Cardiac septum (tissue), 1 donor: ENCODE measurements at regions of chr20 and their contacts with region 1.

Region 1: DNA sequence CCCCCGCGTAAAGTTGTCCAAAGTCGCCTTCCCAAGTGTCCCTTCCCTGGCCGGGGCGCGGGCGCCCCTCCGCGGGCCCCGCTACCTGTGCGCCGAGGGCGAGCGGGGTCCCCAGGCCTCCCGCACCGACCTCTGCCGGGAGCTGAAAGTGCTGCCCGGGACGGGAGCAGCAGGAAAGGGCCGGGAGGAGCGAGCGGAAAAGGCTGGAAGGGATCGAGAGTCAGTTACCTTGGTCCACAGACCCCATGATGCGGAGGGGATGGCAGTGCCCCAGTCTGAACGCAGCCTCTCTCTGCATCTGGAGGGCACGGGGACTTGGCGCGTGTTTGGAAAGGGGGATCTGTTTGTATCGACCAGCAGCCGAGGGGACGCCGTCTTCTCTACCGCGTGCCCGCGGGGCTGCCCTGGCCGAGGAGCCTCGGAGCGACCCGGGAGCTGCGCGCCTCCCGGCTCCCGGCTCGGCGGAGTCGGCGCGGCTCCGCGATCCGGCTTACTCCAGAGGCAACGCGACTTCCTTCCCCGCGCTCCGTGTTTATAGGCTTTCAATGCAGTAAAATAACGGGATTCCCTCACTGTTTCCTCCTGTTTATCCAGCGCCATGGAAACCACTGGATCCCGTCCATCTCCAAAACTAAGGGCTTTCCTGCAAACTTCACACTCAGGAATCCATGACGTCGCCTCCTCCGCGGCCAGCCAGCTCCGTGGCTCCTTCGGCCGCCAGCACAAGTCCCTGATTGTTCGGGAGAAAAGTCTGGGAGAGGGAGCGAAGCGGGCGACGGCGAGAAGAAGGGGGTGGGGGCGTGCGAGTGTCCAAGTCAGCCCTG is 20.0 kb upstream of the NFATC2 start:
- DNase-seq: peak; percentile 88

Region 2: DNA sequence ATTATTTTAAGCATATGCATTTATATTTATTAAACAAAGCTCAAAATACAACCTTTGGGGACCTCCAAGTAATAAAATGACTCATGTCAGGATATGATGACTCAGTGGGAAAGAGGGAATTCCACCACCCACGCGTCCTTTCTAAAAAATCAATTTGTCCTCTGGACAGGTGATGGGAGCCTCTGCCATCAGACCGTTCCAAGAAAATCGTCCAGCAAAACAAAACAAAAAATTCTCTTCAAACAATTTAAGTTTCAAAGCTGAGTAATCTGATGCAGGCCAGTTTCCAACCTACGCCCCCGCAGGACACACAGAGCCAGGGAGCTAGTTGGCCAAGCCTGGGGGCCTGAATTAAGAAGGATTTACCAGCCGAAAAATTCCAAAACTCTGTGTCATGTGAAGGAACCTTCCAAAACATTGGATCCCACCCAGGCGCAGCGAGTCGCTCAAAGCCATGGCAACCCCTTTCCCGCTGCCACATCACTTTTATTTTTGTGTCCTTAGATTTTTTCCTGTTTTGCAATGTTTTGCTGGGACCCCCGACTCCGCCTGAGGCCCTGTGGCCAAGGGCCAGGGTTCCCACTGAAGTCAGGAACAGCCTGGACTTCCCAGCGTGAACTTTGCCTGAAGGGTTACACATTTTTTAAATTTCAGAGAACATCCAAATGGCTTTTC is 115.3 kb before region 1 on chr20:
- intact Hi-C with region 1: loop called (anchors 2 kb)
- DNase-seq: no peak

Region 3: GRCh38 chr20:51480507-51481270 is 81.9 kb before region 1 on chr20:
- intact Hi-C with region 1: no loop called
- DNase-seq: no peak

Region 4: GRCh38 chr20:51497542-51498478 is 64.7 kb before region 1 on chr20:
- intact Hi-C with region 1: loop called (anchors 10 kb)
- DNase-seq: no peak

Region 5: DNA sequence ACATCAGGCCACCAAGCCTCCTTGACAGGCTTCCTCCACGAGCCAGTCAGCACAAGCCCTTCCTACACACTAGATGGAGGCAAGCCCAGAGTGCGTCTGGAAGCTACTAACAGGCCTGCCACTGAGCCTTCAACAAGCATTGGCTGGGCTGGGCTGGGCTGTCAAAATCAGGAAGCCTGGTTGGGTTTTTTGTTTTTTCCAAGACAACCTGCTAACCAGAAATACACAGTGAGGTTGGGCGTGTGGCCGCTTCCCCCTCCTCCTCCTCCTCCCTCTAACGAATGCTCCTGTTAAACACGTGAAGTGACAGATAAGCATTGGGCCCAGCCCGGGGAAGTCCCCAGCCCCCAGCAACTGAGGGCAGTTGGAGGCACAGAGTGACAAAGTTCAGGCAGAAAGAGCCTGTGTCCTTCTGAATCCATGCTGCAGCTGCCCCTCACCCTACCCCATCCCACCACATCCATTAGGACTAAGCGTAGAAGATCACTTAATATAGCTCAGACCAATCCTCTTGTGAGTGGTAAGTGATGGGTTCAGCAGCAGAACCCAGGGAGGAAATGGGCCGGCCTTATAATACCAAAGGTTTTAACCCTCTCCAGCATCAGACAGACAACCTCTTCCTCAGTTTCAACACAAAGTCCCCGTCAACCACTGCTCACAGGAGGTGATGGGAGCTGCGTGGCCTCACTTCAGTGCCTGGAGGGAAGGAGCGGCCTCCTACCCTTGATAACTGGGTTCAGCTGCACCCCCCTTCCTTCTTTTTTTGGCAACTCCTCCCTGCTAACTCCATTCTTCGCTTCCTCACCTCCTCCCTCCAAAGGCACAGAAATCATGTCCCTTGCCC is 21.1 kb before region 1 on chr20:
- intact Hi-C with region 1: loop called (anchors 1 kb)
- DNase-seq: peak; percentile 90

Region 6: DNA sequence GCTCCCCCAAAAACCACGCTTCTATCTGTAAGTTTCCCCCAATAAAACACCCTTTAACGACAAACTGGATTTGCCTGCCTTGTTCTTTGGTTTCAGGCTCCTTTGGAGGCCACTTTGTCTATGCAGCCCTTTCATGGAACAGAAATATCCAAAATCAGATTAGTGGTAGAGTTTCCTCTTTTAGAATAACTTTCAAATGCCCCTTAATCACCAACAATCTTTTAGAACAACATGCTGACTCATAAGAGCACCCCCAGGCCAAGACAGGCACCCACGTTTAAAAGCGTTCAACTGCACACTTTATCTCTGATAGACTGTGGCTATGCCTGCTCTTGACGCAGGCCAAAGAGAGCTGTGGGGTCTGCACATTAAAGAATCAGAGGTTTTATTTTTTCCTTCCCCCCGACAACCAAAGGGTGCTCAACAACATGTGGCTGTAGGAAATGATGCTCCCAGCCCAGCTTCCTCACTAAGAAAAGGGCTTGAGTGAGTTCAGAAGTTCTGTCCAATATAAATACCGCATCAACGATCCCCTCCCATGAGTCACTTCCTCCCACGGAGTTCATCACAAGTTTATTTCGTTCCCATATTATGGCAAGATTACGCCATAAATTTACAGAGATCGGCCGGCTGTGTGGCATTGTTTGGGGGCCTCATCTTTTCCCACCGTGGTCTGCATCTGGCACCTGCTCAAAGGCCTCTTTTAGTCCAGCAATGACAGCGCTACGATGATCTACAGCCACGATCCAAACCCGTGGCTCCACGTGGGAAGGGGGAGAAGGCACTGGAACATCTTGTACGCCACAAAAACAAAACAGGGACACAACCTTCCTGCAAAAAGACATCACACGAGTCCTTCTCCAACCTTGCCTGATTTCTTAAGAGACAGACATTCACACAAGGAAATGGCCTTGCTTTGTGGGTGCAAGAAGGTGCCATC is 68.7 kb after region 1 on chr20:
- intact Hi-C with region 1: loop called (anchors 2 kb)
- DNase-seq: no peak

Region 7: DNA sequence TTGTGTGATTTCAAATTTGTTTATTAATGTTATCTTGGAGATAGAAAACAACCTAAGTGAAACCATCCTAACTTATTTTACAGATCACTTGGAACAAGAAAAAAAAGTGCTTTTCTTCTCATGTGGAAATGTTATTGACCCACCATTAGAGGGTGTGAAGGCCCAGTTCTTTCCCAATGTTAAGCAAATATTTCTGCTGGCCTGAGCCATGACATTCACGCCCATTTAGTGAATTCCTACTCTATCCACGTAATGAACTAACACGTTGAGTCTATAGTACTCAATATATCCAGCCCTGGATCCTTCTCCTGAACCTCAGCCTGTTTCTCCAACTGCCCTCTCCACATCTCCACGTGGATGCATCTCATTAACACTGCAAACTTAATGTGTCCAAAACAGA is 809.6 kb after region 1 on chr20:
- intact Hi-C with region 1: no loop called
- DNase-seq: no peak